ENCODE measurements at regions of chr12 and their contacts with region 1.

Region 1: DNA sequence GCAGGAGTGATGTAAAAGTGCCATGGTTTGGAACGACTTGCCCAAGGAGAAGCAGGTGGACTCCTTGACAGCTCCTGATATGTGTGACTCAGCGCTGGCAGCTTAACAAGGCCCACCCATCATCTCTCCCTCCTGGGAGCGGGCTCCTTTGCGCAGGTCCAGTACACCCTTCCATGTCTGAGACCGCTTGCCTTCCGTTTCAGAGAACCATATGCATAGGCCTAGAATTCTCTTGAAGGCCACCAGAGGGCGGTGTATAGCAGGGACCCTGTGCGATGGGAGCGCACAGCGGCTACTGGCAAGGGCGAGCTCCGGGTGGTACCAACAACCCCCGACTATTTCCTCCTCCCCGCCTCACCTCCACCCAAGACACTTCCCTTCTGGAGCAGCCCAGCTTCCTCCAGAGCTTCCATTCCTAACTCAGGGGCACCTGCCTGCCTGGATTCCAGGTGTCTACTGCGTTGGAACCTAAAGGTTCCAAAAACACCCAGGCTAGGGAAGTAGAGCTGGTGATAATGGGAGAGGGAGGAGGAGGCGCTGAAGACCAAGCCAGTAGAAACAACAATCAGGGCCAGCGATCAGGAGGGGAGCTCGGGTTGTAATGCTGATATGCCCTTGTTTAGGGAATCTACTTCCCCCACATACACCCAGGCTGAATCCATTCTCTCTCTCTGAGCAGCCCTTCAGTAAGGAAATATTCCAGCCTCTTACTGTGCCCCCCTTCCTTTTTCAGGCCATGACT is 6.2 kb downstream of the DHH start:
- DNase-seq: peak; percentile 93
- H3K4me3 Mint-ChIP-seq: no peak overlapping the region
- H3K27ac Mint-ChIP-seq: no peak overlapping the region
- H3K4me1 Mint-ChIP-seq: peaks cover 8% of the 10 kb centered on the region
- H3K27me3 Mint-ChIP-seq: no peaks in the 10 kb centered on the region
- CTCF ChIP-seq: peak; percentile 79

Region 2: GRCh38 chr12:49069507-49070346 is 18.6 kb before region 1 on chr12 and contains the start of gene RHEBL1:
- CTCF ChIA-PET with region 1: interaction called, 46 read pairs
- POLR2A ChIA-PET with region 1: interaction called, 6 read pairs
- intact Hi-C with region 1: loop called (anchors 1 kb)
- DNase-seq: peak; percentile 98
- H3K4me3 Mint-ChIP-seq: peak within 1 kb of the TSS; percentile 83
- H3K27ac Mint-ChIP-seq: peak within 1 kb of the TSS; percentile 73
- H3K4me1 Mint-ChIP-seq: peaks cover 18% of the 10 kb centered on the region
- H3K27me3 Mint-ChIP-seq: no peaks in the 10 kb centered on the region
- CTCF ChIP-seq: no peak
- total RNA-seq, gene RHEBL1: 0.35 and 0.93 TPM in 2 replicates

Region 3: DNA sequence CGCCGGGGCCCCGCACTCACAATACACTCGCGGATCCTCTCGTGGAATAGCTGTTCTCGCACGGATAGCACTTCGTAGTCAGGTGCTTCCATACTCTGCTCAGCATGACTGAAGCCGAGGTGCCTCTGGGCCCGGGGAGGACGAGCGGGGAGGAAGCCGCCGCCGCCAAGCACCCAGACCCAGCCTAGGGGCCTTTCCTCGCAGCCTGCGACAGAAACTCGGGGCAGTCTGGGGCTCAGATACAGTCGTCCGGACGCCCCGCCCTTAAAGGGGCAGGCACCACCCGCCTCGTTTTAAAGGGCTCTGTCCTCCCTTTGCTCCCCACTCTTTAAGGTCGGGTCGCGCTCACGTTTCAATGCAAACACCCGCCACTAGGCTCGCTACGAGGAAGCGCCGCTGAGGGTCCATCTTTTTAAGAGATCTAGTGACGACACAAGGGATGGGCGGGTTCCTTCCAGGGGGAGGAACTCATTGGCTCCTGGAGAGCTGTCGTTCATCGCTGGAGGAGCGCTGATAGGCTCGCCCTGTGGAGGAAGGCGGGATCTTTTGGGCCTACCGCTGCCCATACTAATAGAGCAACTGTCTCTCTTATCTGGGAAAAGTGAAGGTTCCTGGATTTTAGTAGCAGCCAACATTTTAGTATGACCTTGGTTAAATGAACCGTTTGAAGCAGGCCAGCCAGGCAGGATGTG is 22.2 kb after region 1 on chr12 and contains the start of gene LMBR1L:
- CTCF ChIA-PET with region 1: interaction called, 52 read pairs
- POLR2A ChIA-PET with region 1: interaction called, 24 read pairs
- intact Hi-C with region 1: no loop called
- DNase-seq: peak; percentile 99
- H3K4me3 Mint-ChIP-seq: peak within 1 kb of the TSS; percentile 86
- H3K27ac Mint-ChIP-seq: peak within 1 kb of the TSS; percentile 97
- H3K4me1 Mint-ChIP-seq: peaks cover 18% of the 10 kb centered on the region
- H3K27me3 Mint-ChIP-seq: no peaks in the 10 kb centered on the region
- CTCF ChIP-seq: peak; percentile 14
- total RNA-seq, gene LMBR1L: 27.8 and 35.7 TPM in 2 replicates

Region 4: DNA sequence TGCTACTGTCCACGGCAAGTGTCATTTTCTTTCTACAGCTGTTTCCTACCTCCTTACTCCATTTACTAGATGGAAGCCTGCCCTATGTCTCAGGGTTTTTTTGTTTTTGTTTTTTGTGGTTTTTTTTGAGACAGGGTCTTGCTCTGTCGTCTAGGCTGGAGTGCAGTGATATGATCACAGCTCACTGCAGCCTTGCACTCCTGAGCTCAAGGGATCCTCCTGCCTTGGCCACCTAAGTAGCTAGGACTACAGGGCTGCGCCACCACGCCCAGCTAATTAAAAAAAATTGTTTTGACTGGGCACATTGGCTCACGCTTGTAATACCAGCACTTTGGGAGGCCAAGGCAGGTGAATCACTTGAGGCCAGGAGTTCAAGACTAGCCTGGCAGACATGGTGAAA is 85.9 kb after region 1 on chr12:
- CTCF ChIA-PET with region 1: interaction called, 15 read pairs
- POLR2A ChIA-PET with region 1: no interaction called
- intact Hi-C with region 1: no loop called
- DNase-seq: no peak
- H3K4me3 Mint-ChIP-seq: no peak overlapping the region
- H3K27ac Mint-ChIP-seq: no peak overlapping the region
- H3K4me1 Mint-ChIP-seq: no peaks in the 10 kb centered on the region
- H3K27me3 Mint-ChIP-seq: no peaks in the 10 kb centered on the region
- CTCF ChIP-seq: no peak

Region 5: GRCh38 chr12:49225556-49226181 is 137.3 kb after region 1 on chr12:
- CTCF ChIA-PET with region 1: interaction called, 11 read pairs
- POLR2A ChIA-PET with region 1: no interaction called
- intact Hi-C with region 1: no loop called
- DNase-seq: peak; percentile 31
- H3K4me3 Mint-ChIP-seq: no peak overlapping the region
- H3K27ac Mint-ChIP-seq: no peak overlapping the region
- H3K4me1 Mint-ChIP-seq: peaks cover 12% of the 10 kb centered on the region
- H3K27me3 Mint-ChIP-seq: no peaks in the 10 kb centered on the region
- CTCF ChIP-seq: no peak

Region 6: DNA sequence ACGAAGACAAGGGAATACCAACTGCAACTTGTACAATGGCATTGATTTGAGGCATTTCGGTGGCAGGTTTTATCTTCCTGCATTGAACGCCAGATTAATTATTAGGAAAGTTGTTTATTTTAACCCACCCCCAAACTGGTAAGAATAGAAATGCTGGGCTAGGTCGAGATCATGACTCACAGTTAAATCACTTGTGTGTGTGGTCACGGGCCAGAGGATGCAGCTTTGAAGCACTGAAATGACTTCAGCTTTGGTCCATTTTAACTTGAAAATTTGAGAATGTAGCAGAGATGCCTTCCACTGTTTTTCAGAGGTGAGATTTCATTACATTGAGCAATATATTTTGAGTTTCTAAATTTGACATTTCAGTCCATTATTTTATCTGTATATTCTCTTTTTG is 426.9 kb after region 1 on chr12:
- CTCF ChIA-PET with region 1: no interaction called
- POLR2A ChIA-PET with region 1: no interaction called
- intact Hi-C with region 1: no loop called
- DNase-seq: peak; percentile 69
- H3K4me3 Mint-ChIP-seq: no peak overlapping the region
- H3K27ac Mint-ChIP-seq: peak overlapping the region; percentile 49
- H3K4me1 Mint-ChIP-seq: peaks cover 15% of the 10 kb centered on the region
- H3K27me3 Mint-ChIP-seq: no peaks in the 10 kb centered on the region
- CTCF ChIP-seq: no peak

Measured in MCF 10A (cell line).